Mucosa of descending colon (tissue), 3 donors: ENCODE measurements at regions of chr18 and their contacts with region 1.

Region 1: GRCh38 chr18:57410749-57411148 is 24.4 kb upstream of the ONECUT2 start:
- DNase-seq: no peak
- ATAC-seq: no peak
- H3K4me3 ChIP-seq: no peak overlapping the region
- H3K4me1 ChIP-seq: no peaks in the 10 kb centered on the region
- CTCF ChIP-seq: no peak

Region 2: DNA sequence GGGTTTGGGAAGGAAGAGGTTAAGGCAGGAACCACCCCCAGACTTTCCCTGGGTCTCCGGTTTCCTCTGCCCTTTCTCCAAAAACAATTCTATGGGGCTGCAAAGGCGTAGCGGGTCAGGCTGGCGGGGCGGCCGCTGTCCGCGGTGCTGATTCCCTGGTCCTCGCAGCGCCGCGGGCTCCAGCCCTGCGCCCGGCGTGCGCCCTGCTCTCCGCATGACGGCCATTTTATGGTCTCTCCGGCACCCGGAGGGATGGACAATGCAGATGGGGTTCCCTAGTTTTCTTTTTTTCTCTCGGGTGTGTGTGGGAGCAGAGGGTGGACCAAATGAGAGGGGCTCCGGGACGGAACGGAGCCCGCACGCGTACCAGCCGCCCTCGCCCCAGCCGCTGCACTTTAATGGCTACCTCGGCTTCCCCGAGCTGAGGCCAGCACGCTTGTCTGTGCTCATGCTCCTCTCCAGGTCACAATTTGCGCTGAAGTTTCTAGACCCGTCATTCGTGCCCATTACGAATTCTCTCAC is 56.7 kb before region 1 on chr18:
- intact Hi-C with region 1: loop called in 1 of 2 experiments (anchors 10 kb)
- DNase-seq: peak in 2 of 3 donors; percentile 46 to 48
- ATAC-seq: peak; percentile 61
- H3K4me3 ChIP-seq: no peak overlapping the region
- H3K4me1 ChIP-seq: no peaks in the 10 kb centered on the region
- CTCF ChIP-seq: no peak